ENCODE measurements at regions of chr12 and their contacts with region 1.

Region 1: DNA sequence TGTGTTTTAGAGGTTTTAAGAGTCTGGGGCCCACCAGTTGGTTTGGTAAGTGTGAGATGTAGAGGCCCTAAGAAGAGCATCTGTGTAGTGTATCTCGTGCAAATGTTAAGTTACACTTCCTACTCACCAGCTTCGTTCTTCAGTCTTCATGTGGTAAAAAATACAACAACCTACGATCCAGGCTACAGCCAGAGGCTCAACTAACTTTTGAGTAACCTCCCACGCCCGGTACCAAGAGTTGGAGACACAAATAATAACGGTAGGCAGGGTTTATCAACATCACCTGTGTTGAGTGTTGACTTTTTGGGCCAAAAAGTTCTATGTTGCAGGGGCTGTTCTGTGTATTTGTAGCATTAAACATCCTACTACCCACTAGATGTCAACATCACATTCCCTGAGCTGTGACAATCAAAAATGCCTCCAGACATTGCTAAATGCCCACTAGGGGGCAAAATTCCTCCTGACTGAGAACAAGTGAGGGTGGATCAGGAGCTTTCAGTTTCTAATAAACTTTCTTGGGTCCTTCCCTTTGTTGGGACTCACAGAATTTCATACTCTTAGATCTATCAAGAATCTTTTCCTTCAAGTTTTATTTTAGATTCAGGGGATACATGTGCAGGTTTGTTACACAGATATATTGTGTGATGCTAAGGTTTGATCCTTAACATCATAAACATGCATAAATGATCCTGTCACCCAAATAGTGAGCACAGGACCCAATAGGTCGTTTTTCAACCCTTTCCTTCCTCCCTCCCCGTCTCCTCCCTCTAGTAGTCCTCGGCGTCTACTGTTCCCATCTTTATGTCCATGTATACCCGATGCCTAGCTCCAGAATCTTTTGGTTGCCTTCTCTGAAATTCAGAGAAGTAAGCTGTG is 94.7 kb downstream of the SLC2A13 start:
- DNase-seq: peak; percentile 36
- H3K4me3 ChIP-seq: peak overlapping the region; percentile 8
- H3K27ac ChIP-seq: no peak overlapping the region
- H3K27me3 ChIP-seq: no peaks in the 10 kb centered on the region
- CTCF ChIP-seq: peak; percentile 84

Region 2: DNA sequence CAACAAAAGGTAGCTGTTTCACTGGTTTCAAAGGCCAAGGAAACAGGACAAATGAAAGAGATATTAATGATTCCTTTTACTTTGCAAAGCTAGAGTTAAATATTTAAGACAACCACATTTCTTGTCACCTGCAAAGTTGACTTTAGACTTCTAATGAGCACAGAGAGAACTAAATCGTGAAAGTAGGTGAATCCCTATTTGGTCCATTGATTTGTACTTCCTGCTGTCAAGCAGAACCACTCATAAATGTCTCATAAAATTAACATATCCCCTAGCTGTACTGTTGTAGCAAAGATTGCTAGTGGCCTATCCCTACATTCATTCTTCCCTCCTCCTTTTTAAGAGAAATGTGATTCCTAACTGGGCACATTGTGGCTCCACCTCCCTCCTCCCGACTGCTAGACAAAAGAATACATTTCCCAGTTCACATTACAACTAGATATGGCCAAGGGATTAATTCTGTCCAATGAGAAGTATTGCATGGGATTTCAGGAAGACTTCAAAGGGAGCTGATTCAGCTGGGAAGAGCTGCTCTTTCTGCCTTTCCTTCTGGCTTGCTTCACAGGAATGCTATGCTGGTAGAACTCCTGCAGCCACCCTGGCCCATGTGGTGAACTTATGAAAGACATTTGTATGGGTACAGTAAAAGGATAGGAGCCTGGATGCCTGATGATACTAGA is 164.0 kb before region 1 on chr12:
- CTCF ChIA-PET with region 1: no interaction called
- POLR2A ChIA-PET with region 1: no interaction called
- DNase-seq: peak; percentile 3
- H3K4me3 ChIP-seq: no peak overlapping the region
- H3K27ac ChIP-seq: no peak overlapping the region
- H3K27me3 ChIP-seq: no peaks in the 10 kb centered on the region
- CTCF ChIP-seq: no peak

Region 3: DNA sequence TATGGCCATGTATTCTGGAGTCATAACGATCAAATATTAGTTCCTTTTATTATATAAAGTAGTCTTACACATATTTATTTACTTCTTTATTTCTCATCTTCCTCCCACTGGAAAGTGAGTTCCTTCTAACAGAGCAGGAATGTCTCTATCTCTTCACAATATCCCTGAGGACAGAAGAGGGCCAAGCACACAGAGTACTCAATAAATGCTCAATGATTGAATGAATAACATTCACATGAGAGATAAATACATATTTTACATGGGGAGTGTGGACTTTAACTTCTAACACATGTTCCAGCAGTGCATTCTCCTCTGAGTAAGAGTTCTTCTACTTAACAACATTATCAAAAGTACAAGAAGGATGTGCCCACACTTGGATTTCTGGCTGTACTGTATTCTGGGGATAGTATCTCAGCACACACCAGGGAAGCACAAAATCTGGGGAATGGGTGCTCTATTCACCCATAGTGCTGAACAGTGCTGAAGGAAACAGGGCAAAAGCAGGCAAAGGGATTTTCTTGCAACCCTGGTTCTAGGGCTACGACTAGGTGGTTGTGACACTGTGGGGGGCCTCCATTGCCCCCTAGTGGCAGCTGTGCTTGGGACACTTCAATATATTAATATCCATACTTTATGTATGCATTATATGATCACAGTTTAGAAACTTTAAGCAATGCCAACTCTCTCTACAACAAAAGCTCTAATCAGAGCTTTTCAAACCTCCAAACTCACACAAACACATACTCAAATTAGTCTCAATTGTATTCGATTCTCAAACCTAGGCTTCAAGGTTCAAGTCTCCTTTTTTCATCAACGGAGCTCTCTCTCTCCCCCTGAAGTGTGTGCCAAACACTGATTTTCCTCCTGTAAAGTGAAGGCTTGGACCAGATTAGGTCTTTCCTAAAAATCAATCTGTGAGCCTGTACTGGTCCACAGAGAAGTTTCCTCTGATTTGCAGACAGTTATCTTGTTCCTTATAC is 20.7 kb before region 1 on chr12:
- CTCF ChIA-PET with region 1: interaction called, 11 read pairs
- POLR2A ChIA-PET with region 1: no interaction called
- DNase-seq: peak; percentile 2
- H3K4me3 ChIP-seq: no peak overlapping the region
- H3K27ac ChIP-seq: no peak overlapping the region
- H3K27me3 ChIP-seq: no peaks in the 10 kb centered on the region
- CTCF ChIP-seq: peak; percentile 85

Region 4: DNA sequence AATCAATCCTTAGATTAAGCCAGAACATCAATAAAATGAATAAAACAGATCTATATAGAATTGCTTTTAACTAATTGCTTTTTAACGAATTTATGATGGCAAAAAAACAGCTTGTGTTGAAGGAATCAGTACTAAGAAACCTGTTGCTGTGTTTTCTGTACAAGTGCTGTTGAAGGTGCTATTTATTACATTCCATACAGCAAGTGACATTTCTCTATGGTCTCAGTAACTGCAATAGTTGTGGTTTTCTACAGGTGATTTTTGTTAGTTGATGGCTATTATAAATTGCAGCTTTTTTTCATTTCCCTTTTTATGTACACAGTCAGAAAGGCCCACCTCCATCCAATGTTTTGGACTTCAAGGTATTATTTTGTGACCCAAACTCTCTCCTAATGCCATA is 38.1 kb after region 1 on chr12:
- CTCF ChIA-PET with region 1: interaction called, 18 read pairs
- POLR2A ChIA-PET with region 1: no interaction called
- DNase-seq: no peak
- H3K4me3 ChIP-seq: no peak overlapping the region
- H3K27ac ChIP-seq: no peak overlapping the region
- H3K27me3 ChIP-seq: no peaks in the 10 kb centered on the region
- CTCF ChIP-seq: no peak

Region 5: GRCh38 chr12:40099423-40099853 is 88.3 kb after region 1 on chr12:
- CTCF ChIA-PET with region 1: interaction called, 102 read pairs
- POLR2A ChIA-PET with region 1: no interaction called
- DNase-seq: no peak
- H3K4me3 ChIP-seq: no peak overlapping the region
- H3K27ac ChIP-seq: no peak overlapping the region
- H3K27me3 ChIP-seq: no peaks in the 10 kb centered on the region
- CTCF ChIP-seq: no peak

Region 6: GRCh38 chr12:40117818-40118217 is 106.7 kb after region 1 on chr12:
- CTCF ChIA-PET with region 1: interaction called, 14 read pairs
- POLR2A ChIA-PET with region 1: no interaction called
- DNase-seq: no peak
- H3K4me3 ChIP-seq: no peak overlapping the region
- H3K27ac ChIP-seq: no peak overlapping the region
- H3K27me3 ChIP-seq: no peaks in the 10 kb centered on the region
- CTCF ChIP-seq: no peak